WTC11 (cell line): ENCODE measurements at regions of chr12 and their contacts with region 1.

Region 1: GRCh38 chr12:4228122-4228580 is 45.4 kb upstream of the CCND2 start:
- DNase-seq: peak; percentile 56
- ATAC-seq: peak; percentile 88
- H3K4me3 Mint-ChIP-seq: peak overlapping the region; percentile 67
- H3K27ac Mint-ChIP-seq: peak overlapping the region; percentile 75
- H3K4me1 Mint-ChIP-seq: peaks cover 16% of the 10 kb centered on the region
- H3K27me3 Mint-ChIP-seq: no peaks in the 10 kb centered on the region; the same call in 1 of the 2 replicates
- CTCF ChIP-seq: no peak

Region 2: GRCh38 chr12:4135919-4136605 is 92.1 kb before region 1 on chr12:
- CTCF ChIA-PET with region 1: interaction called, 13 read pairs
- POLR2A ChIA-PET with region 1: no interaction called
- DNase-seq: no peak
- ATAC-seq: no peak
- H3K4me3 Mint-ChIP-seq: peak overlapping the region; percentile 55; the same call in 1 of the 2 replicates
- H3K27ac Mint-ChIP-seq: peak overlapping the region; percentile 97
- H3K4me1 Mint-ChIP-seq: peaks cover 74% of the 10 kb centered on the region
- H3K27me3 Mint-ChIP-seq: no peaks in the 10 kb centered on the region
- CTCF ChIP-seq: no peak

Region 3: GRCh38 chr12:4193821-4194220 is 34.3 kb before region 1 on chr12:
- CTCF ChIA-PET with region 1: no interaction called
- POLR2A ChIA-PET with region 1: no interaction called
- DNase-seq: no peak
- ATAC-seq: no peak
- H3K4me3 Mint-ChIP-seq: no peak overlapping the region
- H3K27ac Mint-ChIP-seq: no peak overlapping the region
- H3K4me1 Mint-ChIP-seq: peaks cover 19% of the 10 kb centered on the region
- H3K27me3 Mint-ChIP-seq: peaks cover 9% of the 10 kb centered on the region
- CTCF ChIP-seq: no peak

Region 4: GRCh38 chr12:4203772-4204376 is 24.3 kb before region 1 on chr12:
- CTCF ChIA-PET with region 1: interaction called, 12 read pairs
- POLR2A ChIA-PET with region 1: no interaction called
- DNase-seq: no peak
- ATAC-seq: peak; percentile 94
- H3K4me3 Mint-ChIP-seq: peak overlapping the region; percentile 51
- H3K27ac Mint-ChIP-seq: peak overlapping the region; percentile 57
- H3K4me1 Mint-ChIP-seq: peaks cover 70% of the 10 kb centered on the region
- H3K27me3 Mint-ChIP-seq: no peaks in the 10 kb centered on the region
- CTCF ChIP-seq: no peak

Region 5: GRCh38 chr12:4269279-4269991 is 41.3 kb after region 1 on chr12:
- CTCF ChIA-PET with region 1: interaction called, 15 read pairs
- POLR2A ChIA-PET with region 1: interaction called, 9 read pairs
- DNase-seq: peak; percentile 85
- ATAC-seq: peak; percentile 14
- H3K4me3 Mint-ChIP-seq: peak overlapping the region; percentile 91
- H3K27ac Mint-ChIP-seq: no peak overlapping the region
- H3K4me1 Mint-ChIP-seq: peaks cover 26% of the 10 kb centered on the region
- H3K27me3 Mint-ChIP-seq: peaks cover 25% of the 10 kb centered on the region
- CTCF ChIP-seq: no peak